ENCODE measurements at regions of chr17 and their contacts with region 1.

Region 1: GRCh38 chr17:30808785-30809286 is 15.7 kb downstream of the CRLF3 start:
- DNase-seq: peak in 29 of 35 experiments; percentile 17 to 82 (median 39)
- ATAC-seq: peak; percentile 89 to 97 (median 96)
- H3K4me3 ChIP-seq: peak overlapping the region; percentile 22 to 42
- H3K4me3 Mint-ChIP-seq: peak overlapping the region; percentile 80 to 87 (median 80)
- H3K27ac ChIP-seq: peak overlapping the region; percentile 76
- H3K27ac Mint-ChIP-seq: peak overlapping the region; percentile 99
- H3K4me1 ChIP-seq: peaks cover 55 to 63% of the 10 kb centered on the region in 2 experiments
- H3K4me1 Mint-ChIP-seq: peaks cover 68 to 75% (median 74%) of the 10 kb centered on the region in 3 donors
- H3K27me3 ChIP-seq: no peaks in the 10 kb centered on the region
- H3K27me3 Mint-ChIP-seq: no peaks in the 10 kb centered on the region

Region 2: DNA sequence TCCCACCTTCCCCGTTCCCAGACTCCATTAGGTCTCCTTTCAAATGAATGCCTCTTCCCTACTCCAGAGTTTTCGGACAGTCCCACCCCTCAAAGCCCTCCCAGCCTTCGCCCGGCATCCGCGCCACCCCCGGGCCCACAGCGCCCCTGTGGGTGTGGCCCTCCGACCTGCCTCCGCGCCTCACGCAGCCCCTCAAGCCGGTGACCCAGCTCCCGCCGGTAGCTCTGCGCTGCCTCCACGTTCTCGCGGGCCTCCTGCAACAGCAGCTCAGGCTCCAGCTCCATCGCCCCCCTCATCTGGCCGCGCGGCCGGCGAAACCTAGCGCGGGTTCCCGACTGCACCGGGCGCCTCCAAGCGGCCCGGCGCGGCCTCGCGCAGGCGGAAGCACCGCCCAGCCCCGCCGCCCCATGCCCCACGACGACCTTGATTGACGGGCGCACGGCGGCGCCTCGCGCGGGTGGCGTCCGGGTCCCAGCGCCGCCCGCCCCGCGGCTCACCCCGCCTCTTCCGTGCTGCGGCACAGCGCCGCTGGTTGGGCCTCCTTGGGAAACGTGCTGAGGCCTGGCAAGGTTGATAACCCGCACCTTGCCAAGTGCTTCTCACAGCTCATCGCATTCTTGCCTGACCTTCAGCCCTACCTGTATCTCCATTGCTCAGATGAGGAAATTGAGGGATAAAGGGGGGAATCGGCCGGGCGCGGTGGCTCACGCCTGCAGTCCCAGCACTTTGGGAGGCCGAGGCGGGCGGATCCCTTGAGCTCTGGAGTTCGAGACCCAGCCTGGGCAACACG is 15.7 kb after region 1 on chr17 and contains the start of gene CRLF3:
- CTCF ChIA-PET with region 1: interaction called, 9 to 48 read pairs
- POLR2A ChIA-PET with region 1: interaction called, 5 read pairs
- DNase-seq: peak; percentile 79 to 95 (median 89)
- ATAC-seq: peak; percentile 94 to 97 (median 96)
- H3K4me3 ChIP-seq: peak within 1 kb of the TSS; percentile 77 to 85
- H3K4me3 Mint-ChIP-seq: peak within 1 kb of the TSS; percentile 90 to 94 (median 93)
- H3K27ac ChIP-seq: peak within 1 kb of the TSS; percentile 72
- H3K27ac Mint-ChIP-seq: peak within 1 kb of the TSS; percentile 93 to 94
- H3K4me1 ChIP-seq: peaks cover 32 to 33% of the 10 kb centered on the region in 2 experiments
- H3K4me1 Mint-ChIP-seq: peaks cover 38 to 44% (median 41%) of the 10 kb centered on the region in 3 donors
- H3K27me3 ChIP-seq: no peaks in the 10 kb centered on the region
- H3K27me3 Mint-ChIP-seq: no peaks in the 10 kb centered on the region
- total RNA-seq, gene CRLF3: 73.3 to 112 (median 89.2) TPM

Region 3: GRCh38 chr17:31197991-31198390 is 389.2 kb after region 1 on chr17:
- CTCF ChIA-PET with region 1: no interaction called
- POLR2A ChIA-PET with region 1: no interaction called
- DNase-seq: no peak
- ATAC-seq: no peak
- H3K4me3 ChIP-seq: no peak overlapping the region
- H3K4me3 Mint-ChIP-seq: no peak overlapping the region
- H3K27ac ChIP-seq: no peak overlapping the region
- H3K27ac Mint-ChIP-seq: no peak overlapping the region
- H3K4me1 ChIP-seq: no peaks in the 10 kb centered on the region
- H3K4me1 Mint-ChIP-seq: no peaks in the 10 kb centered on the region
- H3K27me3 ChIP-seq: no peaks in the 10 kb centered on the region
- H3K27me3 Mint-ChIP-seq: no peaks in the 10 kb centered on the region